ENCODE measurements at regions of chr11 and their contacts with region 1.

Region 1: DNA sequence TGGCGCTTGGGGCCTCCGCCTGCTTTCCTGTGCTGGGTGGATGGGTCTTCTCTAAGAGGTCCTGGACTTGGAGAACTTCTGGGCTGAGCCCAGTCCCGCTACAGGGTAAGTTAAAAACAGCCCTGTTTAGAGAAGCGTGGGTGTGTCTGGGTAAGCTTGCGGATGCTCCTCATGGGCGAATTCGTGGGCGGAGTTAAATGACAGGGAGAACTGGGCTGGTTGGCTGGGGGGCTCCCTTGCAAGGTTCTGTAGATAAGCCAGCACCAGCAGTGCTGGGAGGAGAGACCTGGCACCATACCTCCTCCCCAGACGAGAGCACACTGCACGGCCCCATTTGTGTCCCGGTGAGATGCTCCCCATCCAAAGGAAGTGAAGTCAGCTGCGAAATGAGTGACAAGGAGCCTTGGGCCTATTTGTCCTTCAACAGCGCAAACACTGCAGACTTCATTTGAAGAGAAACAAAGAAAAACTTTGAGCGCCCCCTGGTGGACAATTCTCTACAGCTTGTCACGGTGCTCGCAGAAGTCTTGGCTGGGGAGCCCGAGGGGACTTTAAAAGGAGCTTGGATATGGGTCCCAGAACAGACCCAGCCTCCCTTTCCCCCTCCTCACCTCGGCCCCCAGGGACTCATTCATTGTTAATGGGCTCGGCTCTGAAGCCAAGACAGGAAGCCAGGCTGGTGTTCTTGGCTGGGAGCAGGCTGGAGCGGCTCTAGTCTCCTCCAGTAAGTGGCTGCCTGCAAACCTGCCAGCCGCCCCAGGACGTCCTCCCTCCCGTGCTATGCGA is 39.5 kb downstream of the TP53I11 start:
- DNase-seq: peak; percentile 72 to 88
- ATAC-seq: peak; percentile 70 to 86 (median 79)
- H3K4me3 ChIP-seq: no peak overlapping the region
- H3K4me3 Mint-ChIP-seq: no peak overlapping the region
- H3K27ac ChIP-seq: no peak overlapping the region
- H3K27ac Mint-ChIP-seq: no peak overlapping the region
- H3K4me1 ChIP-seq: peaks cover 17% of the 10 kb centered on the region
- H3K4me1 Mint-ChIP-seq: peaks cover 0 to 5% of the 10 kb centered on the region in 2 donors
- H3K27me3 ChIP-seq: peaks cover 3% of the 10 kb centered on the region
- H3K27me3 Mint-ChIP-seq: peaks cover 9 to 17% of the 10 kb centered on the region in 2 donors
- CTCF ChIP-seq: peak; percentile 80

Region 2: DNA sequence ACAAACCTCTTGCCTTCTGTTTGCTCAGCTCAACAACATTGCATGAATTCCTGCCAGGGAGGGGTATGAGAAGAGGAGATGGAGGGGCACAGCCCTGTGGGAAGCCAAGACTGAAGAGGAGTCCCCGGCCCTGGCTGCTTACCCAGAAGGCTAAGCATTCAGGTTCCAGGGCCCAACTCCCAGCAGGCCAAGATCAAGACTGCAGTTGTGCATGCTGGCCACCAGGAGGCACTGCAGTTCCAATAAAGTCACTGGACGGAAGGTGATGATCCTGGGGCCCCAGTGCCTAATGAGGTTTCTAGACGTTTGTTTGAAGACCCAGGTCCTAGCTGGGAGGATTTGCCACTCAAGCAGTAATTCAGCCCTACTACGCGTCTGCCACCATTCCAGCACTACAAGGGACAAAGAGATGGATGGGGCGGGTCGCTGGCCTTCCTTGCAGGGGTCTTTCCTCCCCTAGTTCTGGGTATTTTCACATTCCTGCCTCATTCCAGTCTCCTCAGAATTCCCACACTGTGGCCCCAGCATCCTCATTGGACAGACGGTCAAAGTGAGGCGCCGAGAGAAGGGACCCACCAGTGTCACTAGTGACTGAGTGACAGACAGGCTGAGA is 624.8 kb before region 1 on chr11:
- intact Hi-C with region 1: loop called (anchors 5 kb)
- DNase-seq: peak; percentile 34 to 75
- ATAC-seq: peak; percentile 58 to 84 (median 67)
- H3K4me3 ChIP-seq: no peak overlapping the region
- H3K4me3 Mint-ChIP-seq: no peak overlapping the region
- H3K27ac ChIP-seq: no peak overlapping the region
- H3K27ac Mint-ChIP-seq: no peak overlapping the region
- H3K4me1 ChIP-seq: no peaks in the 10 kb centered on the region
- H3K4me1 Mint-ChIP-seq: peaks cover 0 to 4% of the 10 kb centered on the region in 2 donors
- H3K27me3 ChIP-seq: no peaks in the 10 kb centered on the region
- H3K27me3 Mint-ChIP-seq: no peaks in the 10 kb centered on the region
- CTCF ChIP-seq: peak; percentile 94

Region 3: GRCh38 chr11:44556735-44557409 is 354.4 kb before region 1 on chr11:
- intact Hi-C with region 1: loop called (anchors 5 kb)
- DNase-seq: peak; percentile 42 to 85
- ATAC-seq: peak; percentile 64 to 78 (median 75)
- H3K4me3 ChIP-seq: no peak overlapping the region
- H3K4me3 Mint-ChIP-seq: no peak overlapping the region
- H3K27ac ChIP-seq: peak overlapping the region; percentile 42
- H3K27ac Mint-ChIP-seq: no peak overlapping the region
- H3K4me1 ChIP-seq: peaks cover 21% of the 10 kb centered on the region
- H3K4me1 Mint-ChIP-seq: peaks cover 8 to 13% of the 10 kb centered on the region in 2 donors
- H3K27me3 ChIP-seq: no peaks in the 10 kb centered on the region
- H3K27me3 Mint-ChIP-seq: no peaks in the 10 kb centered on the region
- CTCF ChIP-seq: peak; percentile 76

Region 4: DNA sequence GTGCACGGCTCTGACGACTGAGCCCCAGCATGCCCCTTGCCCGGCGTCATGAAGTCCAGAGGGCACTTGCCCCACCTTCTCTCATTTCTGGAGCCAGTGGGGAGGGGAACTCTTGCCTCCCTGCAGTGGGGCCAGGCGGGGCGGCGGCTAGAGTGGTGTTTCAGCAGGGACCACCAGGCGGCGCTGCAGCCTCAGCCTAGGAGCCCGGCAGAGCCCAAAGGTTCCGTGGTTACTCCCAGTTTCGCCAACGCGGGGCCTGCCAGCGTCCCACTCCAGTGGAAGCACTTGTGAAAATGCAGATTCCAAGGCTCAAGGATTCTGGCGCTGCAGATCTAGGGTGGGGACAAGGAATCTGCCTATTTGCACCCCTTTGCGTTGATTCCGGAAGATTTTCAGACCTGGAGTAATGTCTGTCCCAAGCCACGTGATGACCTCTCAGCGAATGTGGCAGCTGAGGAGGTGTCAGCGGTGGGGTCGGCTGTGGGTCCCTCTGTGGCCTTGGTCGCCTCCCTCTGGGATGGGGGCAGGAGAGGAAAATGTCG is 290.0 kb before region 1 on chr11:
- intact Hi-C with region 1: loop called (anchors 2 kb)
- DNase-seq: peak; percentile 23 to 72
- ATAC-seq: peak; percentile 36 to 66 (median 46)
- H3K4me3 ChIP-seq: no peak overlapping the region
- H3K4me3 Mint-ChIP-seq: no peak overlapping the region
- H3K27ac ChIP-seq: no peak overlapping the region
- H3K27ac Mint-ChIP-seq: no peak overlapping the region
- H3K4me1 ChIP-seq: peaks cover 5% of the 10 kb centered on the region
- H3K4me1 Mint-ChIP-seq: no peaks in the 10 kb centered on the region
- H3K27me3 ChIP-seq: no peaks in the 10 kb centered on the region
- H3K27me3 Mint-ChIP-seq: no peaks in the 10 kb centered on the region
- CTCF ChIP-seq: peak; percentile 37

Region 5: DNA sequence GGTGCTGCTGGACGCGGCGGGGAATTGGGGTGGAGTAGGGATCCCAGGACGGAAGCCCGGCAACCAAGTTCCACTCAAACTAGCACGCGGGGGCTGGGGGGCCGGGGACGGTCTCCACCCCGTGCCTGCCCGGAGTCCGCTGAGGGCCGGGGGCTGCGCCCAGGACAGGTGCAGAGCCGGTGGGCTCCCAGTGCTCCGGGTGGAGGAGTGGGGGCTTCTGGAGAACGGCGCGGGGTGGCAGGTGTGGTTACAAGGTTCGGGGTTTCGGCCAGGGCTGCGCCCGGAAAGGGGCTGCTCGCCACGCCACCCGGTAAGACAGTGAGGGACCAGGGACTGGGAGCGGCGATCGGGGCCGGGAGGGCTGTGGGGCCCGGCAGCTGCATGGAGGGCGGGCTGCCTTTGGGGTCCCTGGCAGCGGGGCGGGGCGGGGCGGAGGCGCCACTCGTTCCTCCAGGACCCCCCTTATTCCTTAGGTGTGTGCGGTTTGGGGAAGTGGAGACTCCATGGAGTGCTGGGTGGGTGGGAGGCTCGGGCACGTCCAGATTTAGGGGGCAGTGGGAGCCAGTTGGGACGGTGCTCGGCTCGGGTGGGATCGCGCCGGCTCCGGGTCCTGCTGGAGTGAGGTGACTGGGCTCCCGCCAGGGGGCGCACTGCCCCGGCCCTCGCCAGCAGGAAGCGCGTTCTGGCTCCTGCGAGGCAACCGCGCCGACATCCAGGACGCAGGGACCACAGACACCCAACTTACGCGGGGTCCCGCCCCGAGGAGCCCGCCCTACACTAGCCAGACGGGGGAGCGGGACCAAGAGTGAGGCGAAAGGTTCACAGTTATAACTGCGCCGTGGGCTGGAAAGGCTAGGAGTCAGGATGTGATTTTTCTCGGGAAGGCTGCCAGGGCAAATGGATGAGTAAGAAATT is 183.6 kb before region 1 on chr11:
- intact Hi-C with region 1: loop called (anchors 1 kb)
- DNase-seq: peak; percentile 69 to 91
- ATAC-seq: peak; percentile 80 to 87 (median 82)
- H3K4me3 ChIP-seq: peak overlapping the region; percentile 58
- H3K4me3 Mint-ChIP-seq: peak overlapping the region; percentile 81
- H3K27ac ChIP-seq: no peak overlapping the region
- H3K27ac Mint-ChIP-seq: peak overlapping the region in 1 of 2 donors; percentile 47
- H3K4me1 ChIP-seq: peaks cover 25% of the 10 kb centered on the region
- H3K4me1 Mint-ChIP-seq: peaks cover 5 to 15% of the 10 kb centered on the region in 2 donors
- H3K27me3 ChIP-seq: peaks cover 11% of the 10 kb centered on the region
- H3K27me3 Mint-ChIP-seq: peaks cover 39 to 46% of the 10 kb centered on the region in 2 donors
- CTCF ChIP-seq: peak; percentile 91

Region 6: DNA sequence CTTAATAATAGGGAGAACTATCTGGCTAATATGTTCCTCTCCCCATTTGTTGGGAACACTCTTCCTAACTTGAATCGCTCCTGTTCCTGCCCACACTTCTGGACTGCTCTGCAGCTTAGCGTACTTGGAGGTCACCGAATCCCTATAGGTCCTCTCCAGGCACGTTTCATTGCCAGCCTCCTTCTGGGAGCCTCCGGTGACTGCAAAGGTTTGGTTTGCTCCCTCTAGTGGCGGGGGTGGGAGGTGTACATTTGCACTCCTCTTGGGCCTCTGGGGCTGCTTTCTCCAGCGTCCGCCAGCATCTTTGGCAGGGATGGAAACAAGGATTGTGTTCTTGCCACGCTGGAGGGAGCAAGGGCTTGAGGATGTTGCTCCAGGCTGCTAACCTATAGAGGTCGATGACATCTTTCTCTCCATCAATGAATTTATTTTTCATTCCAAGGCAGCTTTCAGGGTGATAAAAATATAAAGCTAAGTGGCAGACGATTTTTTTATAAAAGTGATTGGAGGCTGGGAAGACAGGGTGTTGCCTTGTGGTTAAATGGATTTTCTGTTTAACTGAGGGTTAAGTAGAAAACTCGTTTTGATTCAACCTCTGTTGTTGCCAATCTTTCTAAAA is 135.7 kb before region 1 on chr11:
- intact Hi-C with region 1: loop called (anchors 5 kb)
- DNase-seq: peak; percentile 20 to 76
- ATAC-seq: peak in 1 of 3 donors; percentile 70
- H3K4me3 ChIP-seq: no peak overlapping the region
- H3K4me3 Mint-ChIP-seq: no peak overlapping the region
- H3K27ac ChIP-seq: no peak overlapping the region
- H3K27ac Mint-ChIP-seq: no peak overlapping the region
- H3K4me1 ChIP-seq: no peaks in the 10 kb centered on the region
- H3K4me1 Mint-ChIP-seq: no peaks in the 10 kb centered on the region
- H3K27me3 ChIP-seq: no peaks in the 10 kb centered on the region
- H3K27me3 Mint-ChIP-seq: peaks cover 20 to 21% of the 10 kb centered on the region in 2 donors
- CTCF ChIP-seq: peak; percentile 67

Measured in natural killer cell (primary cell).